ENCODE measurements at regions of chr15 and their contacts with region 1.

Region 1: GRCh38 chr15:90059208-90059985 is 42.9 kb downstream of the IDH2 start:
- DNase-seq: peak; percentile 97
- ATAC-seq: peak; percentile 94
- H3K4me3 ChIP-seq: peak overlapping the region; percentile 33; the same call in 1 of the 2 replicates
- H3K27ac ChIP-seq: peak overlapping the region; percentile 91
- H3K4me1 ChIP-seq: peaks cover 60% of the 10 kb centered on the region
- H3K27me3 ChIP-seq: no peaks in the 10 kb centered on the region
- CTCF ChIP-seq: no peak
- EP300 ChIP-seq: peak; percentile 90 to 96
- POLR2A ChIP-seq: peak; percentile 80
- RAD21 ChIP-seq: peak; percentile 20; the same call in 1 of the 2 replicates

Region 2: GRCh38 chr15:89893696-89894455 is 165.5 kb before region 1 on chr15 and contains the start of gene AP3S2:
- CTCF ChIA-PET with region 1: interaction called, 10 read pairs
- POLR2A ChIA-PET with region 1: no interaction called
- RAD21 ChIA-PET with region 1: interaction called, 4 read pairs
- SMC1A ChIA-PET with region 1: no interaction called
- in situ Hi-C with region 1: no loop called
- intact Hi-C with region 1: no loop called
- DNase-seq: peak; percentile 73
- ATAC-seq: peak; percentile 90
- H3K4me3 ChIP-seq: peak within 1 kb of the TSS; percentile 97
- H3K27ac ChIP-seq: peak within 1 kb of the TSS; percentile 87
- H3K4me1 ChIP-seq: peaks cover 23% of the 10 kb centered on the region
- H3K27me3 ChIP-seq: no peaks in the 10 kb centered on the region
- CTCF ChIP-seq: no peak
- EP300 ChIP-seq: peak in 1 of 2 experiments; percentile 31; a peak in 1 of 4 replicates
- POLR2A ChIP-seq: peak; percentile 92
- RAD21 ChIP-seq: no peak
- polyA plus RNA-seq, gene AP3S2: 10.0 to 13.1 TPM

Region 3: DNA sequence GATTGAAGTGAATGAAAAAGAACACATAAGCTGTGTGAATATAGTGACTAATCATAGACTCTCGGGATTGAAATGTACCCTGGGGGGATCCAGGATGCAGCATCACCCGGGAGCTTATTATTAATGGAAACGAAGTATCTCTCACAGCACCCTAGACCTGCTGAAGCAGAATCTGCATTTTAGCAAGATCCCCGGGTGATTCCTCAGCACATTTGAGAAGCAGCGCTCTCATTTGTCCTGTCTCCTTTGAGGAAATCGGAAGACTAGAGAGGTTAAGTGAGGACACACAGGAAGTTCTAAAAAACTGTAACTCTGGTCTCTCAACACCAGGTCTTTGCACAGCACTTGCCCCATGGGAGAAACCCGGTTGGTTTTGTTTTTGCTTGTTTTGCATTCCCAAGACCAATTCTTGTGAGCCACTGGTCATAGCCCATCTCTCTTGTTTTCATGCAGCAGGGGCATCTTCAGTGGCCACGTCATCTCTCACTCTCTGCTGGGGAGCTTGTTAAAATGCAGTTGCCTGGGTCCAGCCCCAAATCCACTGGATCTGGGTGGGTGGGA is 28.1 kb before region 1 on chr15:
- CTCF ChIA-PET with region 1: interaction called, 3 read pairs
- POLR2A ChIA-PET with region 1: interaction called, 11 read pairs
- RAD21 ChIA-PET with region 1: interaction called, 14 read pairs
- SMC1A ChIA-PET with region 1: interaction called, 22 read pairs
- in situ Hi-C with region 1: no loop called
- intact Hi-C with region 1: no loop called
- DNase-seq: peak; percentile 95
- ATAC-seq: peak; percentile 92
- H3K4me3 ChIP-seq: peak overlapping the region; percentile 12; the same call in 1 of the 2 replicates
- H3K27ac ChIP-seq: peak overlapping the region; percentile 75
- H3K4me1 ChIP-seq: peaks cover 41% of the 10 kb centered on the region
- H3K27me3 ChIP-seq: no peaks in the 10 kb centered on the region
- CTCF ChIP-seq: no peak
- EP300 ChIP-seq: peak; percentile 60 to 83; a peak in 3 of 4 replicates
- POLR2A ChIP-seq: 0 out of 2 replicates have a peak, but pooled peaks have one; percentile 17
- RAD21 ChIP-seq: 0 out of 2 replicates have a peak, but pooled peaks have one; percentile 6

Region 4: DNA sequence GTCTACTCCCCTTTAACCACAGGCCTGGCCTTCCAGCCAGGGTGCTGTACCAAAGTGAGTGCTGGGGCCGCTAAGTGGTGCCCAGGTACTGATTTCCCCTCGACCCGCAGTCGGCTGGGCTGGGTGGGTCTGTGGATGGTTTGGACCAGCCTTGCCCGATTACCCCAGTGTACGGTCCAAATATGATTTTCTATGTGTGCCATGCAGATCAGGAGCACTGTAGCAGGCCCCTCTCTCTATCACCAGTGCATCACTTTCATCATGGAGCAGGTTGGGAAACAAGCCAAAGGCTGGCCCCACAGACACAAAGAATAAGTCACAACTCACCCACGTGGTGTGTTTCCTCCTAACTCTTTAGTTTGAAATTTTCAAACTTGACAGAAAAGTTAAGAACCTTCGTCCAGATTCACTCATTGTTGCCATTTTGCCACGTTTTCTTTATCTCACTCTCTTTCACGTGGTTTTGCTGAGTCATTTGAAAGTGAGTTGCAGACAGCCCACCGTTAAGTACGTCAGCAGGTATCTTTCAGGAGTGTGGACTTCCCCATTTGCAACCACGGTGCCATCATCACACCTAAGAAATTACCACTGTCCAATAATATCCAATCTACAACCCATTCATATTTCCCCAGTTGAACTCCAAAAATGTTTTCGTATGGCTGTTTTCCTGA is 21.3 kb before region 1 on chr15:
- CTCF ChIA-PET with region 1: interaction called, 3 read pairs
- POLR2A ChIA-PET with region 1: interaction called, 3 read pairs
- RAD21 ChIA-PET with region 1: interaction called, 6 read pairs
- SMC1A ChIA-PET with region 1: interaction called, 3 read pairs
- in situ Hi-C with region 1: no loop called
- intact Hi-C with region 1: loop called (anchors 1 kb)
- DNase-seq: peak; percentile 89
- ATAC-seq: peak; percentile 87
- H3K4me3 ChIP-seq: no peak overlapping the region
- H3K27ac ChIP-seq: peak overlapping the region; percentile 87
- H3K4me1 ChIP-seq: peaks cover 56% of the 10 kb centered on the region
- H3K27me3 ChIP-seq: no peaks in the 10 kb centered on the region
- CTCF ChIP-seq: no peak
- EP300 ChIP-seq: peak; percentile 99 to 100
- POLR2A ChIP-seq: no peak
- RAD21 ChIP-seq: no peak

Region 5: GRCh38 chr15:90082140-90082715 is 22.8 kb after region 1 on chr15:
- CTCF ChIA-PET with region 1: no interaction called
- POLR2A ChIA-PET with region 1: no interaction called
- RAD21 ChIA-PET with region 1: no interaction called
- SMC1A ChIA-PET with region 1: no interaction called
- in situ Hi-C with region 1: no loop called
- intact Hi-C with region 1: no loop called
- DNase-seq: no peak
- ATAC-seq: no peak
- H3K4me3 ChIP-seq: no peak overlapping the region
- H3K27ac ChIP-seq: no peak overlapping the region
- H3K4me1 ChIP-seq: no peaks in the 10 kb centered on the region
- H3K27me3 ChIP-seq: no peaks in the 10 kb centered on the region
- CTCF ChIP-seq: no peak
- EP300 ChIP-seq: no peak
- POLR2A ChIP-seq: 0 out of 2 replicates have a peak, but pooled peaks have one; percentile 8
- RAD21 ChIP-seq: no peak

Region 6: GRCh38 chr15:90402230-90402629 is 342.8 kb after region 1 on chr15:
- CTCF ChIA-PET with region 1: no interaction called
- POLR2A ChIA-PET with region 1: no interaction called
- RAD21 ChIA-PET with region 1: no interaction called
- SMC1A ChIA-PET with region 1: no interaction called
- in situ Hi-C with region 1: no loop called
- intact Hi-C with region 1: no loop called
- DNase-seq: no peak
- ATAC-seq: no peak
- H3K4me3 ChIP-seq: no peak overlapping the region
- H3K27ac ChIP-seq: no peak overlapping the region
- H3K4me1 ChIP-seq: peaks cover 13% of the 10 kb centered on the region; the same call in 1 of the 2 replicates
- H3K27me3 ChIP-seq: no peaks in the 10 kb centered on the region
- CTCF ChIP-seq: no peak
- EP300 ChIP-seq: no peak
- POLR2A ChIP-seq: no peak
- RAD21 ChIP-seq: no peak